Heart right ventricle (tissue), 16 donors: ENCODE measurements at regions of chr11 and their contacts with region 1.

Region 1: DNA sequence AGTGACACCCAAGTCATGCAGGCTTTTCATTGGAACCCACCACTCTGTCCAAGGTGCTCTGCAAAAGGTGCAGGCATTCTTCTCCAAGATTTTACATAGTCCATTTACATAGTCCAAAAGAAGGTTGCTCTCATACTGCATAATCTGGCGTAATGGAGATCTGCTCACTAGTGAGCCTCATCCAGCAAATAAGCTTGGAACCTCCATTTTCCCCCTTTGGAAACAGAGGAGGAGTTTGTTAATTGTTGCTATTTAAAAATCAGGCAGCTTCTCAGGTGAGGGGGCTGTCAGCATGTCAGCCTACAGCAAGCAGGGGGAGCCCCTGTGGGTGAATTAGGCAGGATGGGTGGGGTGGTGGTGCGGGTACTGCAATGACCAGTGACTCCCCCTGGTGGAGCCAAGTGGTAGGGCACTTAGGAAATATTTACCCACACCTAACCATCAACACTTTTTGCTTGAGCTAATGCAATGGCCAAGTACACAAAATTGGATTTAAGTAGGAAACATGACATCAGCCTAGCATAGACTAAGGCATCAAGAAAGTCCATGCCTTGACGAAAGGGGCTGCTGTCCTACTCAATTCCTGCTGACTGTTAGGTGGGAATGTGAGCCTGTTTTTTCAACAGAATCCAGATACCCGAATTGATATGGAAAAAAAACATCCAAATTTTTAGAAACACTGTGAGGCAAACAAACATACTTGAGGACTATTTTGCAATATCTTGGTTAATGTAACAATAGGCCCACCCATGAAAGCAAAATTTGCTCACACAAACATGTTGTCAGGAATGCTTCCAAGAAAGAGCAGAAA is 64.5 kb downstream of the AMBRA1 start:
- DNase-seq: peak; percentile 36 to 71
- ATAC-seq: peak; percentile 41 to 86 (median 82)
- H3K4me3 ChIP-seq: no peak overlapping the region
- H3K27ac ChIP-seq: no peak overlapping the region
- H3K4me1 ChIP-seq: peaks cover 5 to 48% (median 38%) of the 10 kb centered on the region in 9 donors
- H3K27me3 ChIP-seq: no peaks in the 10 kb centered on the region
- CTCF ChIP-seq: peak; percentile 90 to 97 (median 92)

Region 2: GRCh38 chr11:46392421-46393230 is 136.7 kb before region 1 on chr11:
- intact Hi-C with region 1: loop called in 3 of 10 experiments (anchors 2 to 5 kb)
- DNase-seq: peak; percentile 84 to 91
- ATAC-seq: peak; percentile 88 to 94 (median 92)
- H3K4me3 ChIP-seq: peak overlapping the region; percentile 25 to 54 (median 48)
- H3K27ac ChIP-seq: no peak overlapping the region
- H3K4me1 ChIP-seq: peaks cover 19 to 49% (median 34%) of the 10 kb centered on the region in 9 donors
- H3K27me3 ChIP-seq: peaks cover 21 to 55% (median 45%) of the 10 kb centered on the region in 7 donors
- CTCF ChIP-seq: peak in 1 of 9 donors; percentile 13

Region 3: DNA sequence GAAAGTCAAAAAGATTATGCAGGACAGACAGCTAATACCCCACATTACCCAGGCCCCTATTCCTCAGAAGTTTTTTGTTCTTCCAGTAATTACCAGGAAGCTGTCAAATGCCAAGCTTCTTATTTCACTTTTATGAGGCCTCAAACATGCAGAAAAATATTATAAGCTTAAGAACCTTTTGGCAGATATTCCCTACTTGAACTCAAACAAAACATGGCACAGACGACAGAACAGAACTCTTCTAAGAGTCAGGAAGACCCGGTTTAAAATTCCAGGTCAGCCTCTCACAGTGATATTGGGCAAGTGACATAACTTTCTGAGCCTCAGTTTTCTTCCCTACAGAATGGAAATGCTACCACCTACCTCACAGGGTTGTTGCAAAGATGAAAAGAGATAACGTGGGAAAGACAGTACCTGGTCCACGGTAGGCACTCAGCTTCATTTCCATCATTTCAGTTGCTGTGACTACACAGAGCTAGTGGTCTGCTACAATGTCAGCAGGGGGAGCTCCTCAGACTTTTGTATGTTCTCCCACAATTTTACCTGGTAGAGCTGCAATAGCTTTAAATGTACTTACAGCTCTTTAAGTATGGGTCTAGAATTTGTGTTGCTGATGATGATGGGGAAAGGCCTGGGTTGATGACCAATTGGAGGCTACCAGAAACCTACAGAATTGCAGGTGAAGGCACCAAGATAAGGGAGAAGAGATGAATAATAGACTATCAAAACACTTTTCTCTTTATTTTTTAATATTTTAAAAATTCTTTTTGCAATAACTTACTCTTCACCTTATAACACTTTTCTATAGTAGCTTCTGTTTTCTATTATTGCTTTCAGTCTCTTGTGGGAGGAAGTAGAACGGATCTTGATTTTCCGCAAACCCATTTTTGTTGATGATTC is 39.4 kb before region 1 on chr11:
- intact Hi-C with region 1: loop called in 7 of 10 experiments (anchors 2 to 10 kb)
- DNase-seq: no peak
- ATAC-seq: peak in 5 of 8 donors; percentile 34 to 59 (median 51)
- H3K4me3 ChIP-seq: no peak overlapping the region
- H3K27ac ChIP-seq: no peak overlapping the region
- H3K4me1 ChIP-seq: peaks cover 0 to 50% (median 36%) of the 10 kb centered on the region in 9 donors
- H3K27me3 ChIP-seq: no peaks in the 10 kb centered on the region
- CTCF ChIP-seq: peak in 8 of 9 donors; percentile 18 to 67 (median 59)